ENCODE measurements at regions of chr10 and their contacts with region 1.

Region 1: GRCh38 chr10:26334932-26335573 is 103.1 kb upstream of the APBB1IP start:
- DNase-seq: peak; percentile 76
- ATAC-seq: peak; percentile 87
- H3K4me3 Mint-ChIP-seq: peak overlapping the region; percentile 61
- H3K27ac Mint-ChIP-seq: peak overlapping the region; percentile 72
- H3K4me1 Mint-ChIP-seq: peaks cover 8% of the 10 kb centered on the region
- H3K27me3 Mint-ChIP-seq: no peaks in the 10 kb centered on the region

Region 2: GRCh38 chr10:26437637-26438461 is 102.8 kb after region 1 on chr10 and contains the start of gene APBB1IP:
- CTCF ChIA-PET with region 1: interaction called, 11 read pairs
- POLR2A ChIA-PET with region 1: interaction called, 3 read pairs
- DNase-seq: peak; percentile 69
- ATAC-seq: peak; percentile 61
- H3K4me3 Mint-ChIP-seq: peak within 1 kb of the TSS; percentile 96
- H3K27ac Mint-ChIP-seq: peak within 1 kb of the TSS; percentile 95
- H3K4me1 Mint-ChIP-seq: peaks cover 41% of the 10 kb centered on the region
- H3K27me3 Mint-ChIP-seq: no peaks in the 10 kb centered on the region
- total RNA-seq, gene APBB1IP: 75.9 to 76.0 TPM

Region 3: DNA sequence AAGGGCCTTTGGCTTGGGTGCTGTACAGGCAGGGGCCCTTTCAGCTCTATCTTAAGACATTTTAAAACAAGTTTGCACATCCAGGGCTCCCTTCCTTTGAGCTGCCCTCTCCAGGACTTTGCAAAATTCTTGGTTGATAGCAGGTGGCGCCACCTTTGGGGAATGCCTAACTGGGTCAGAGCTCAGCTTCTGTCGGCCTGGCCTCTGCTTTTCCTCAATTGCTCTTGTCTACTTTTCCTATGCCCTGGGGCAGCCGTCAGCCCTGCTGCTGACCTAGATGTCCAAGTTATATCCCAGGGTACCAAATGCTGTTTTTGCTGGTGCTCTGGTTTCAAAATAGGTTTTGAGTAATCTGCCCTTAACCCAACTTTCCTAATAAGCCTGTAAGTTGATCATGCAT is 168.9 kb after region 1 on chr10:
- CTCF ChIA-PET with region 1: interaction called, 12 read pairs
- POLR2A ChIA-PET with region 1: no interaction called
- DNase-seq: peak; percentile 36
- ATAC-seq: no peak
- H3K4me3 Mint-ChIP-seq: no peak overlapping the region
- H3K27ac Mint-ChIP-seq: peak overlapping the region; percentile 39
- H3K4me1 Mint-ChIP-seq: peaks cover 5% of the 10 kb centered on the region
- H3K27me3 Mint-ChIP-seq: no peaks in the 10 kb centered on the region

Region 4: GRCh38 chr10:26516540-26517101 is 181.6 kb after region 1 on chr10:
- CTCF ChIA-PET with region 1: no interaction called
- POLR2A ChIA-PET with region 1: no interaction called
- DNase-seq: no peak
- ATAC-seq: no peak
- H3K4me3 Mint-ChIP-seq: no peak overlapping the region
- H3K27ac Mint-ChIP-seq: no peak overlapping the region
- H3K4me1 Mint-ChIP-seq: peaks cover 5% of the 10 kb centered on the region
- H3K27me3 Mint-ChIP-seq: no peaks in the 10 kb centered on the region

Region 5: DNA sequence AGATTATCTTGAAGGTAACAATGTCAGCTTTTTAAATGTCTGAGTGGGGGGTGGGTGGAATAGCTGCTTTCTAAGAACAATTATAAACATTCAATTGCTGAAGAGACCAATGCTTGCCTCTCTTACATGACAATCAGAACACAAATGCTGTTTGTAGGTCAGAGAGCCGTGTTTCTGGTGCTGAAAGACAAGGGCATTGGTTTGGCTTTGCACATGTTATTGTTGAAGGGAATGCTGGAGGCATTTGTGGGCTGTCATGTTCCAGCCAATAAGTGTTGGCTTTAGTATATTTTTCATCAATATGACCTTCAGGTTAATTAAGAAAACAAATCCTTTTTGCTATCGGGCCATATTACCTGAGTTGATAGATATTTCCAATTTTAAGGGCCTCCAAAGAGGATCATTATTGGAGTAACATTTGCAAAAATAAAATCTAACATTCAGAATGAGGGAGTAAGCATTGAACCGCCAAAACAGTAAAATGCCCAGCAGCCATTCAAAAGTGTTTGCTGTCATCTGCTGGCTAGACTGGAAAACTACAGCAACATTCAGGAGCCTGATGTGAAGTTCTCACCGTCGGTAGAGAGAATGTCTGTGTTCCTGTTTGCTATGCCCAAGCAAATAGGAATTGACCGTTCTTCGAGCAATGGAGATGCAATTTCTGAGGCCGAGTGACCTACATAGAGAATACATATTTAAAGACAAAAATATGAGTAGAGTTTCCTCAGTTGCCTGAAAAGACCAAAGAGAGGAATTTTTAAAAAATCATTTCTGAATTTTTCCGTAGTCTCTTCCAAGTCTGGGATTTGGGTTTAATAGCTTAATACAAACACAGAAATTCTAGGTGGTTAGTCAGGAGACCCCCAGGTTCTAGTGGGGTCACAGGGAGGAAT is 221.9 kb after region 1 on chr10:
- CTCF ChIA-PET with region 1: interaction called, 28 read pairs
- POLR2A ChIA-PET with region 1: no interaction called
- DNase-seq: peak; percentile 43
- ATAC-seq: no peak
- H3K4me3 Mint-ChIP-seq: no peak overlapping the region
- H3K27ac Mint-ChIP-seq: peak overlapping the region; percentile 33
- H3K4me1 Mint-ChIP-seq: peaks cover 5% of the 10 kb centered on the region
- H3K27me3 Mint-ChIP-seq: no peaks in the 10 kb centered on the region

Region 6: GRCh38 chr10:26881600-26882331 is 546.7 kb after region 1 on chr10:
- CTCF ChIA-PET with region 1: interaction called, 25 read pairs
- POLR2A ChIA-PET with region 1: no interaction called
- DNase-seq: no peak
- ATAC-seq: peak; percentile 76
- H3K4me3 Mint-ChIP-seq: no peak overlapping the region
- H3K27ac Mint-ChIP-seq: no peak overlapping the region
- H3K4me1 Mint-ChIP-seq: no peaks in the 10 kb centered on the region
- H3K27me3 Mint-ChIP-seq: peaks cover 18% of the 10 kb centered on the region